ENCODE measurements at regions of chr14 and their contacts with region 1.

Region 1: DNA sequence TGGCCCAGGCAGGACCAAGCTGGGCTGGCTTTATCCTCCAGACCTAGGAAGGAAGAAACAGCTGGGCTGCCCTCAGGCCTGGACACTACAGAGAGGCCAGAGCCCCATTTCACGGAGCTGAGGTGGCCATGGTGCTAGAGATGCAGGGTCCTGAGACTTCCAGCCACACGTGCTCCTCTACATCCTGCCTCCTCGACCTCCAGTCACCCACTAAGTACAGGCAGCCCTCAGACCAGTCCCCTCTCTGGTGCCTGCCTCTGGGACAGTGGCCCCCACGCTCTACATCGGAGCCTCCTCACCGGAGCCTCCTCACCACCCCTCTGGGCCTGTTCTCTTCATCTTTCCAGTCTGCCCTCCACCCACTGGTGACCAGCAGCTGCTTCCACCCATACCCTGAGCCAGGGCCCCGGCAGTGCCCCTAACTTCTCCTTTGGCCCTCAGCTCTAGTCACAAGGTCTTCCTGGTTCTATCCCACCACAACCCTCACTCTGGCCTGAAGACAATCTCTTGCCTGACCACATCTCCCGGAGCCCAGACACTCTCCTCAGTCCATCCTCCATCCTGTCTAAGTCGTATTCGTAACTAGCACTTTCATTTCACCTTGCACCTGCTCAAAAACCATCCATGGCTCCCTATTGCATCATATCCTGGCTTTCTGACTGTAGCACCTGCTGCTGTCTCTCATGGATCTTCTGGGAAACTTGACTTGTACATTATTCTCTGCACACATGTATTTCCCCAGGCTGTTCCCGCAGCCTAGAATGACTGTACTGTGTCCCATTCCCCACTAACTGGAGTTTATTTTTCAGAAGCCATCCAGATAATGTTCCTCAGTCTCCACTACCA is 43.9 kb downstream of the DIO3 start:
- DNase-seq: no peak
- ATAC-seq: no peak; the same call in 2 of the 3 replicates
- H3K4me3 ChIP-seq: no peak overlapping the region
- H3K27ac ChIP-seq: no peak overlapping the region
- H3K4me1 ChIP-seq: no peaks in the 10 kb centered on the region
- H3K27me3 ChIP-seq: peaks cover 4 to 32% of the 10 kb centered on the region in 2 experiments; a peak in 2 of 5 replicates
- CTCF ChIP-seq: no peak
- EP300 ChIP-seq: no peak
- POLR2A ChIP-seq: no peak
- RAD21 ChIP-seq: no peak

Region 2: GRCh38 chr14:101575582-101575981 is 29.6 kb before region 1 on chr14:
- CTCF ChIA-PET with region 1: no interaction called
- POLR2A ChIA-PET with region 1: no interaction called
- in situ Hi-C with region 1: no loop called
- intact Hi-C with region 1: no loop called
- DNase-seq: no peak
- ATAC-seq: no peak
- H3K4me3 ChIP-seq: no peak overlapping the region
- H3K27ac ChIP-seq: no peak overlapping the region
- H3K4me1 ChIP-seq: no peaks in the 10 kb centered on the region
- H3K27me3 ChIP-seq: peaks cover 2 to 20% of the 10 kb centered on the region in 2 experiments; a peak in 3 of 5 replicates
- CTCF ChIP-seq: no peak
- EP300 ChIP-seq: no peak
- POLR2A ChIP-seq: no peak
- RAD21 ChIP-seq: no peak

Region 3: GRCh38 chr14:101619484-101619883 is 14.3 kb after region 1 on chr14:
- CTCF ChIA-PET with region 1: no interaction called
- POLR2A ChIA-PET with region 1: no interaction called
- in situ Hi-C with region 1: no loop called
- intact Hi-C with region 1: loop called (anchors 1 kb)
- DNase-seq: no peak
- ATAC-seq: no peak
- H3K4me3 ChIP-seq: no peak overlapping the region
- H3K27ac ChIP-seq: no peak overlapping the region
- H3K4me1 ChIP-seq: no peaks in the 10 kb centered on the region
- H3K27me3 ChIP-seq: peaks cover 0 to 20% of the 10 kb centered on the region in 2 experiments; a peak in 2 of 5 replicates
- CTCF ChIP-seq: no peak
- EP300 ChIP-seq: no peak
- POLR2A ChIP-seq: no peak
- RAD21 ChIP-seq: no peak

Measured in HepG2 (cell line).